Panc1 (cell line): ENCODE measurements at regions of chr6 and their contacts with region 1.

Region 1: GRCh38 chr6:168050881-168051586 is 28.0 kb downstream of the FRMD1 start:
- DNase-seq: no peak
- ATAC-seq: peak; percentile 38; the same call in 1 of the 2 replicates
- H3K4me3 ChIP-seq: no peak overlapping the region
- H3K27ac ChIP-seq: no peak overlapping the region
- H3K4me1 ChIP-seq: no peaks in the 10 kb centered on the region
- H3K27me3 ChIP-seq: no peaks in the 10 kb centered on the region
- CTCF ChIP-seq: no peak; the same call in 1 of the 2 replicates

Region 2: DNA sequence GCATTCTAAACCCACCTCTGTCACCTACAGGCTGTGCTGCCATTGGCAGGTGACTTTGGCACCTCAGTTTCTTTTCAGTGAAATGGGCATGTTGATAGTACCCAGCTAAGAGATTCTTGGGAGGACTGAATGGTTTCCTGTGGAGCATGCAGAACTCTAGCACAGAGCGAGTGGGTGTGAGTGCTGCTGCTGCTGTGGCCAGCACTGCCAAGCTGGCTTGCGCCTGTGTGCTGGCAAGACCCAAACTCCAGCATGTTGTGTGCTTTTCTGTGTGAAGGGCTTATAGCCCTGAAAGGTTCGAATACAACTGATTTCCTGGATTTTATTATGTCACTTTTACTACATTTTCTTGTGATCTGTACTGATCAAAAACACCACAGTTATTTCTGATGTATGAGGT is 131.7 kb before region 1 on chr6:
- CTCF ChIA-PET with region 1: no interaction called
- POLR2A ChIA-PET with region 1: no interaction called
- in situ Hi-C with region 1: no loop called
- intact Hi-C with region 1: loop called (anchors 10 kb)
- DNase-seq: no peak
- ATAC-seq: no peak
- H3K4me3 ChIP-seq: no peak overlapping the region
- H3K27ac ChIP-seq: no peak overlapping the region
- H3K4me1 ChIP-seq: no peaks in the 10 kb centered on the region
- H3K27me3 ChIP-seq: no peaks in the 10 kb centered on the region
- CTCF ChIP-seq: no peak

Region 3: GRCh38 chr6:168105813-168106632 is 55.0 kb after region 1 on chr6:
- CTCF ChIA-PET with region 1: interaction called, 10 read pairs
- POLR2A ChIA-PET with region 1: no interaction called
- in situ Hi-C with region 1: no loop called
- intact Hi-C with region 1: no loop called
- DNase-seq: no peak
- ATAC-seq: no peak; the same call in 1 of the 2 replicates
- H3K4me3 ChIP-seq: no peak overlapping the region
- H3K27ac ChIP-seq: no peak overlapping the region
- H3K4me1 ChIP-seq: no peaks in the 10 kb centered on the region
- H3K27me3 ChIP-seq: no peaks in the 10 kb centered on the region
- CTCF ChIP-seq: no peak